ENCODE measurements at regions of chr12 and their contacts with region 1.

Region 1: GRCh38 chr12:19382111-19382526 is 57.2 kb upstream of the AEBP2 start:
- DNase-seq: peak; percentile 83
- H3K4me3 Mint-ChIP-seq: no peak overlapping the region
- H3K27ac Mint-ChIP-seq: peak overlapping the region; percentile 66
- H3K4me1 Mint-ChIP-seq: peaks cover 10% of the 10 kb centered on the region
- H3K27me3 Mint-ChIP-seq: no peaks in the 10 kb centered on the region

Region 2: DNA sequence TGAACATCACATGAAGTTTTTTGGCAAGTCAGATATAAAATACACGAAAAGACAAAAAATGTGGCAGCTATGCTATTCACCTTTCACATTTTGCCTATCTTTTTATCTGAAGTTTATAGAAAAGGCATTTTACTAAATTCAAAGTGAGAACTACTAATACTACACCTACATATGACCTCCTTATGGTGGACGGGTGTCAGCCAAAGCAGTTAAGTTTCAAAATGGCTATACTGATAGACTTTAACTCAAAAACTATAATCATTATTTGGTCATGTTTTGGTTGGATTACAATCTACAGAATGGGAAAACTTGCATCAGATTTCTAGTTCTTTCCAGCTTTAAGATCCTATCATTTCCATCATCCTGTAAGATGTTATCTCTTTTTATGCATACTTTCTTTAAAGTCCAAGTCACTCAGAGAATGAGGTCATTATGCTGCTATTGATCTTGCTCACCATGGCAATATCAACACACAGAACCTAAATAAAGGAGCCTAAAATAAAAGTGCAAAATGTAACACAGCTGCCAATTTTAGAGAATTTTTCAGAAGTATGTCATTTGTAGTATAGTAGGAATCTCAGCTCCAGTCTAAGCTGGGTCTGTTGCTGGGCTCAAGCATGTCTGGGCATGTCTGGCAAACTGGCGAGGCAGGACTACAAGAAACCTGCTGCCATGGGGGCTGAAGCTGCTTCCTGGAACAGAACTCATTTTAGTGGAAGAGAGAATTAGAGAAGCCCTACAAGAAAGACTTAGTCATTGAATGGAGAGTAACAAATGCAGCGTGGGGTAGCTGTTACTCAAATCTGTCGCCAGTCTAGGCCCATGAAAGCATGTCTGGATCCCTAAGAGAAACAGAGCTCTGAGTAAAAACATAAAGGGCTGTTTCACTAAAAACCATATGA is 49.5 kb after region 1 on chr12:
- CTCF ChIA-PET with region 1: no interaction called
- intact Hi-C with region 1: loop called (anchors 1 kb)
- DNase-seq: peak; percentile 75
- H3K4me3 Mint-ChIP-seq: no peak overlapping the region
- H3K27ac Mint-ChIP-seq: peak overlapping the region; percentile 95
- H3K4me1 Mint-ChIP-seq: peaks cover 20% of the 10 kb centered on the region
- H3K27me3 Mint-ChIP-seq: no peaks in the 10 kb centered on the region

Region 3: DNA sequence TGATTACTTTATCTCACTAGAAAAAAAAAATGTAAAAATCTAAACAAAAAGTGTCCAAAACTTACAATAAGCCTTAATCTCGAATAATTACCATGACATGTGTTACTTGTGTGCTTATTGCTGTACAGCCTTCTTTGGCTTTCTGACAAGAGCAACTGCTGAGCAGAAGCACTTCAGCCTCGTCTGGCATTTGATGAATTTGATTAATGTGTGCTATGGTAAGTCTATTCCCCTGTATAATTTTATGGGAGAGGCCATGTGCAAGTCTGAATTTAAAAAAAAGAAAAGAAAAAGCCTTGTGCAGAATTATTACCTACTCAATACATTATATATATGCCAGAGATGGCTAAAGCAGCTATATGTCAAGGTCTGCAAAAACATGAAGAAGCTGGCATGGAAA is 171.1 kb after region 1 on chr12:
- CTCF ChIA-PET with region 1: no interaction called
- intact Hi-C with region 1: loop called (anchors 2 kb)
- DNase-seq: no peak
- H3K4me3 Mint-ChIP-seq: no peak overlapping the region
- H3K27ac Mint-ChIP-seq: no peak overlapping the region
- H3K4me1 Mint-ChIP-seq: peaks cover 12% of the 10 kb centered on the region
- H3K27me3 Mint-ChIP-seq: no peaks in the 10 kb centered on the region